Activated CD4-positive, alpha-beta memory T cell treated with anti-CD3 and anti-CD28 coated beads for 36 hours (primary cell): ENCODE measurements at regions of chr3 and their contacts with region 1.

Region 1: GRCh38 chr3:152444029-152444641 is 175.4 kb downstream of the MBNL1 start:
- DNase-seq: no peak
- H3K4me3 Mint-ChIP-seq: no peak overlapping the region
- H3K27ac Mint-ChIP-seq: peak overlapping the region; percentile 25
- H3K4me1 Mint-ChIP-seq: peaks cover 66% of the 10 kb centered on the region
- H3K27me3 Mint-ChIP-seq: no peaks in the 10 kb centered on the region

Region 2: DNA sequence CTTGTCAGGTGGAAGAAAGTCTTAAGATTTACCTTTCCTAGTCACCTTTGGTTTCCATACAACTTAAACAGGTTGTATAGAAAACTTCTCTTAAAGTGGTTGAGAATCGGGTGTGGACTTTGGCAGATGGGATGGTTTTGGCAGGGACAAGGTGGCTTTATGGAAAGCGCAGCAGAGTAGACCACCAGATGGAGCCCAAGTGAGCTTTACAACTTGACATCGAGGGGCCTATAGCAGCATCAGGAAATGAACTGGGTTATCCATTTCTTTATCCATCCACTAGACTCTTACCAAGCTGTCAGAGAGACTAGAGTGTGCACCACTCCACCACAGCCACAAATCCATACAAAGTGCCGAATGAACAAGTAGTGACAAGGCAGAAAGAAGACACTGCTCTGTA is 260.7 kb before region 1 on chr3:
- CTCF ChIA-PET with region 1: interaction called, 31 read pairs
- POLR2A ChIA-PET with region 1: no interaction called
- intact Hi-C with region 1: loop called (anchors 1 kb)
- DNase-seq: peak; percentile 68
- H3K4me3 Mint-ChIP-seq: peak overlapping the region; percentile 35
- H3K27ac Mint-ChIP-seq: no peak overlapping the region
- H3K4me1 Mint-ChIP-seq: peaks cover 70% of the 10 kb centered on the region
- H3K27me3 Mint-ChIP-seq: no peaks in the 10 kb centered on the region

Region 3: GRCh38 chr3:152268555-152269425 is 175.3 kb before region 1 on chr3 and contains the start of gene MBNL1:
- CTCF ChIA-PET with region 1: interaction called, 4 read pairs
- POLR2A ChIA-PET with region 1: no interaction called
- intact Hi-C with region 1: loop called (anchors 2 kb)
- DNase-seq: peak; percentile 93
- H3K4me3 Mint-ChIP-seq: peak within 1 kb of the TSS; percentile 84
- H3K27ac Mint-ChIP-seq: peak within 1 kb of the TSS; percentile 84
- H3K4me1 Mint-ChIP-seq: peaks cover 52% of the 10 kb centered on the region
- H3K27me3 Mint-ChIP-seq: no peaks in the 10 kb centered on the region
- total RNA-seq, gene MBNL1: 290 to 302 TPM

Region 4: GRCh38 chr3:152331018-152331541 is 113.1 kb before region 1 on chr3:
- CTCF ChIA-PET with region 1: interaction called, 19 read pairs
- POLR2A ChIA-PET with region 1: no interaction called
- intact Hi-C with region 1: no loop called
- DNase-seq: no peak
- H3K4me3 Mint-ChIP-seq: no peak overlapping the region
- H3K27ac Mint-ChIP-seq: peak overlapping the region; percentile 66
- H3K4me1 Mint-ChIP-seq: peaks cover 87% of the 10 kb centered on the region
- H3K27me3 Mint-ChIP-seq: no peaks in the 10 kb centered on the region

Region 5: DNA sequence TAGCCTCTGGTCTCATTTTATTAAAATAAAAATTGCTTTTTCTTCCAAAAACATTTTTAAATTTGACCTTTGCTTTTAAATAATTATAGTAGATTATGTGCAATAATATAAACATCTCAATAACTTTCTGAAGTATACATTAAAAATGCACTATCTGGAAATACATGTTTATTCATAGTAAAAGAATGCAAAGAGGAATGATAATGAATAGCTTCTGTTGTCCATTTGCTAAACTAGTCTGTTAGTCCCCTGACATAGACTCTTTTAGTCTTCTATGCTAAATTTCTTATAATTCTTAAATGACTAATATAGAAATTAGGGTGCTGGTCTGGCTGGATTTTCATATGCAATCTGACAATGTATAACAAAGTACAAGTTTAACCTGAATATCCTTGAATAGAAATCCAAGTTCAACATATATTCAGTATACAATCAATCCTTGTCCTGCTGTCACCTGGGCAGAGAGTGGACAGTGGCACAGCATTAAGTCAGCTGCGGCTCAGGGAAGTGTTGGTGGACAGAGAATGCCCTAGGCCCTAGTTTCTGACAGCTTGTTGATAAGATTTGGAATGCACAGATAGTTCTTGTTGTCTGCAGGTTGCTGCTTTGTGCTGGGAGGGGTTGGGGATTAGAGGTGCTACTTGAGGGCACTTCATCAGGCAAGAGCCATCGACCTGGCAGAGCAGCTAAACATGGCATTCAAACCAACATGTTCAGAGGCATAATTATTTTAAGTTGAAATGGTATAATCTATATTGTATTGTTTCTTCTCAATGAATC is 13.7 kb before region 1 on chr3:
- CTCF ChIA-PET with region 1: interaction called, 11 read pairs
- POLR2A ChIA-PET with region 1: interaction called, 4 read pairs
- intact Hi-C with region 1: no loop called
- DNase-seq: no peak
- H3K4me3 Mint-ChIP-seq: no peak overlapping the region
- H3K27ac Mint-ChIP-seq: peak overlapping the region; percentile 43
- H3K4me1 Mint-ChIP-seq: peaks cover 51% of the 10 kb centered on the region
- H3K27me3 Mint-ChIP-seq: no peaks in the 10 kb centered on the region

Region 6: GRCh38 chr3:152471814-152472671 is 27.9 kb after region 1 on chr3:
- CTCF ChIA-PET with region 1: interaction called, 13 read pairs
- POLR2A ChIA-PET with region 1: no interaction called
- intact Hi-C with region 1: no loop called
- DNase-seq: peak; percentile 80
- H3K4me3 Mint-ChIP-seq: peak overlapping the region; percentile 39
- H3K27ac Mint-ChIP-seq: peak overlapping the region; percentile 39
- H3K4me1 Mint-ChIP-seq: peaks cover 13% of the 10 kb centered on the region
- H3K27me3 Mint-ChIP-seq: no peaks in the 10 kb centered on the region